ENCODE measurements at regions of chr11 and their contacts with region 1.

Region 1: DNA sequence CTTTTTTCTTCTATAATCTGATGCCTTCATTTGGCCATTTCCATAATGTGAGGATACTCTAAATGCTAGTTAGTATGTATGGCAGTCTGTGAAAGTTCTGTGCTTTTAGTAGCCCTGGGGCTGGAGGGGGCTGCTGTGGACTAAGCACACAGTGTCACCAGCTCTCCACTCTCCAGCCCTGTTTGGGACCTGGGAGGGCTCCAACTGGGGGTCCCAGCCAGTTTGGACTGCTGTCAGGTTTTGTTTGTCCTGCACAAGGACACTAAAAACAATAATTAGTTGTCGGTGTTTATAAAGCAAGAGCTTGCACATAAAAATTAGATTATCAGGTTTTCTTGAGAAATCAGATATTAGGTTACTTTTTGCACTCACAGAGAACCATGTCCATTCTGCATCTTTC is 103.1 kb downstream of the LDLRAD3 start:
- DNase-seq: no peak
- ATAC-seq: no peak
- H3K4me3 ChIP-seq: no peak overlapping the region
- H3K27ac ChIP-seq: no peak overlapping the region
- H3K4me1 ChIP-seq: peaks cover 6% of the 10 kb centered on the region; the same call in 1 of the 2 replicates
- H3K27me3 ChIP-seq: no peaks in the 10 kb centered on the region
- CTCF ChIP-seq: no peak

Region 2: GRCh38 chr11:36230779-36231699 is 184.1 kb after region 1 on chr11:
- CTCF ChIA-PET with region 1: no interaction called
- POLR2A ChIA-PET with region 1: interaction called, 11 read pairs
- intact Hi-C with region 1: no loop called
- DNase-seq: peak; percentile 9
- ATAC-seq: peak; percentile 43
- H3K4me3 ChIP-seq: no peak overlapping the region
- H3K27ac ChIP-seq: no peak overlapping the region
- H3K4me1 ChIP-seq: no peaks in the 10 kb centered on the region
- H3K27me3 ChIP-seq: no peaks in the 10 kb centered on the region
- CTCF ChIP-seq: no peak

Measured in PC-3 (cell line).